Activated CD4-positive, alpha-beta T cell treated with anti-CD3 and anti-CD28 coated beads for 36 hours (primary cell): ENCODE measurements at regions of chr13 and their contacts with region 1.

Region 1: DNA sequence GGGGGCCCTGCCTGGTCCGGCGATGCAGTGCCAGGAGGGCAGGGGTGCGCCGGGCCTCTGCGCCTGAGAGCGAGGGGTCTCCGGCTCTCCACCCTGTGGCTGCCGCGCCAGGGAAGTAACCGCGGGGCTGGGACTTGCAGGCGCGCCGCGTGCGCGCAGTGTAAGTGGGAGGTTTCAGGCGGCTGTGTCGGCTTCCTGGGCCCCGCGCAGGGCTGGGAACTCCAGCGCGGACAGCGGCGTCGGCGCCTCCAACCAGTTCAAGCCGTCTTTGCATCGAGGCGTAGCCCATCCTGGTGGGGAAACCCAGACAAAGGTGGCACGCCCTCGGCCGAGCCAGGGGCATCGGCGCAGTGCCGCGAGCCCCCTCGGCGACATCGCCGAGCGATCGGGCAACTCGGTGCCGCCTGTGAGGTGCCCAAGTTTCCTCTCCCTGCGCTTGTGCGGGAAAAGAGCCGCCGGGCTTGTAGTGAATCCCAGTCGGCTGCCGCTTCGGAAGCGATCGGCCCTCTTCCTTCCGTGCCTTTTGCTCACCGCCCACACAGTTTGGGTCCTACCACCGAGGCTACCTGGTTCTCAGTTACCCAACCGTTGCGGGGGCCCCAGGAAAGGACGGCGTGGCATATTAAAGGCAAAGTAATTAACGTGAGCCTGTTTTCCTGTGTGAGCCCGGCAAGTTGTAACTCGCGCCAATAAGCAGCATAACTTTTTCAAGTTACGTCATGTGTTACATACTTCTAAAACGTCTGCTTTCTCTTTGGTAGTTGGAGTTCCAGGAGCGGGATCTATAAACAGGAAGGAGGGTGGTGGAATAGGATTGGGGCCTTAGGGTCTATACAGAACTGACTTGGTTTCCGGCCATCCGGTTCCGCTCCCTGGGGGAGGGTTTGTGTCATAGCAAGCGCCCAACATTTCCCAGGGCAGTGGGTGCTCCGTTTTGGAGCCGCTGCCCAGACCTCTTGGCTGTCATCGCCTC is 1.2 kb downstream of the LRCH1 start:
- DNase-seq: peak; percentile 82
- ATAC-seq: peak; percentile 66
- H3K4me3 Mint-ChIP-seq: peak overlapping the region; percentile 91
- H3K27ac Mint-ChIP-seq: peak overlapping the region; percentile 91
- H3K4me1 Mint-ChIP-seq: peaks cover 47% of the 10 kb centered on the region
- H3K27me3 Mint-ChIP-seq: no peaks in the 10 kb centered on the region

Region 2: GRCh38 chr13:46492946-46493345 is 61.2 kb before region 1 on chr13:
- CTCF ChIA-PET with region 1: interaction called, 8 read pairs
- POLR2A ChIA-PET with region 1: no interaction called
- intact Hi-C with region 1: loop called in 1 of 2 experiments (anchors 2 kb)
- DNase-seq: no peak
- ATAC-seq: no peak
- H3K4me3 Mint-ChIP-seq: no peak overlapping the region
- H3K27ac Mint-ChIP-seq: no peak overlapping the region
- H3K4me1 Mint-ChIP-seq: no peaks in the 10 kb centered on the region
- H3K27me3 Mint-ChIP-seq: no peaks in the 10 kb centered on the region

Region 3: GRCh38 chr13:46542833-46543232 is 11.3 kb before region 1 on chr13:
- CTCF ChIA-PET with region 1: interaction called, 13 read pairs
- POLR2A ChIA-PET with region 1: no interaction called
- intact Hi-C with region 1: no loop called
- DNase-seq: no peak
- ATAC-seq: peak; percentile 36
- H3K4me3 Mint-ChIP-seq: no peak overlapping the region
- H3K27ac Mint-ChIP-seq: no peak overlapping the region
- H3K4me1 Mint-ChIP-seq: peaks cover 3% of the 10 kb centered on the region
- H3K27me3 Mint-ChIP-seq: peaks cover 2% of the 10 kb centered on the region

Region 4: DNA sequence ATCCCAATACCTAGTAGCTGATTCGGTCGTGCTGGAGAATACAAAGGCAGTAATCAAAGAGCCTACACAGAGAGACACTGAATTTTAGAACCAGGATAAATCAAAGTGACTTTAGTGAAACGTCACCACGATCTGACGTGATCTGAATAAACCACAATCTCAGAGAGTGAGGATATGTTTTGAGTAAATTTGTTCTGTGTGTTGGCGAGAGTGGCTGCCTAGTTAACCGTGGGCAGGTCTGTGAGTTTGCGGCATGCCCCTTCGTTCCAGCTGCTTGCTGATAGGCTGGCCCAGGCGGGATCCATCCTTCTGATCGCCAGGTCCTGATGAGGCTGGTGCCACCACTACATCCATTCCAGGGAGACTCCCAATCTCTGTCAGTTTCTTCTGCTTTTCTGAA is 39.2 kb after region 1 on chr13:
- CTCF ChIA-PET with region 1: interaction called, 4 read pairs
- POLR2A ChIA-PET with region 1: no interaction called
- intact Hi-C with region 1: loop called (anchors 1 kb)
- DNase-seq: peak; percentile 79
- ATAC-seq: peak; percentile 96
- H3K4me3 Mint-ChIP-seq: peak overlapping the region; percentile 15
- H3K27ac Mint-ChIP-seq: peak overlapping the region; percentile 47
- H3K4me1 Mint-ChIP-seq: peaks cover 73% of the 10 kb centered on the region
- H3K27me3 Mint-ChIP-seq: no peaks in the 10 kb centered on the region

Region 5: GRCh38 chr13:46679369-46680120 is 125.4 kb after region 1 on chr13:
- CTCF ChIA-PET with region 1: interaction called, 9 read pairs
- POLR2A ChIA-PET with region 1: no interaction called
- intact Hi-C with region 1: loop called in 1 of 2 experiments (anchors 1 kb)
- DNase-seq: peak; percentile 50
- ATAC-seq: peak; percentile 95
- H3K4me3 Mint-ChIP-seq: no peak overlapping the region
- H3K27ac Mint-ChIP-seq: no peak overlapping the region
- H3K4me1 Mint-ChIP-seq: peaks cover 28% of the 10 kb centered on the region
- H3K27me3 Mint-ChIP-seq: no peaks in the 10 kb centered on the region